CD14-positive monocyte (primary cell): ENCODE measurements at regions of chr21 and their contacts with region 1.

Region 1: GRCh38 chr21:34888569-34889319 is 160.4 kb downstream of the RUNX1 start:
- DNase-seq: peak; percentile 87 to 92 (median 90)
- H3K4me3 ChIP-seq: peak overlapping the region; percentile 73 to 96 (median 87)
- H3K4me3 Mint-ChIP-seq: peak overlapping the region; percentile 95 to 98
- H3K27ac ChIP-seq: peak overlapping the region; percentile 91 to 98
- H3K27ac Mint-ChIP-seq: peak overlapping the region; percentile 96 to 99 (median 99)
- H3K4me1 ChIP-seq: peaks cover 34 to 46% of the 10 kb centered on the region in 2 donors
- H3K4me1 Mint-ChIP-seq: peaks cover 30% of the 10 kb centered on the region
- H3K27me3 ChIP-seq: no peaks in the 10 kb centered on the region
- H3K27me3 Mint-ChIP-seq: no peaks in the 10 kb centered on the region
- CTCF ChIP-seq: no peak

Region 2: GRCh38 chr21:34807146-34807880 is 81.4 kb before region 1 on chr21:
- intact Hi-C with region 1: loop called (anchors 2 to 5 kb)
- DNase-seq: peak; percentile 90 to 98 (median 95)
- H3K4me3 ChIP-seq: peak overlapping the region in 1 of 3 experiments; percentile 14
- H3K4me3 Mint-ChIP-seq: peak overlapping the region in 1 of 2 donors; percentile 64
- H3K27ac ChIP-seq: peak overlapping the region; percentile 85 to 98
- H3K27ac Mint-ChIP-seq: peak overlapping the region; percentile 95 to 99 (median 98)
- H3K4me1 ChIP-seq: peaks cover 40 to 61% of the 10 kb centered on the region in 2 donors
- H3K4me1 Mint-ChIP-seq: peaks cover 77% of the 10 kb centered on the region
- H3K27me3 ChIP-seq: no peaks in the 10 kb centered on the region
- H3K27me3 Mint-ChIP-seq: no peaks in the 10 kb centered on the region
- CTCF ChIP-seq: no peak

Region 3: GRCh38 chr21:34946916-34947534 is 58.3 kb after region 1 on chr21:
- intact Hi-C with region 1: loop called in 1 of 2 experiments (anchors 10 kb)
- DNase-seq: no peak
- H3K4me3 ChIP-seq: no peak overlapping the region
- H3K4me3 Mint-ChIP-seq: no peak overlapping the region
- H3K27ac ChIP-seq: no peak overlapping the region
- H3K27ac Mint-ChIP-seq: peak overlapping the region in 2 of 7 donors; percentile 13 to 79
- H3K4me1 ChIP-seq: peaks cover 11 to 19% of the 10 kb centered on the region in 2 donors
- H3K4me1 Mint-ChIP-seq: peaks cover 42% of the 10 kb centered on the region
- H3K27me3 ChIP-seq: no peaks in the 10 kb centered on the region
- H3K27me3 Mint-ChIP-seq: peaks cover 0 to 2% (median 0%) of the 10 kb centered on the region in 3 donors
- CTCF ChIP-seq: no peak

Region 4: GRCh38 chr21:35051287-35051818 is 162.6 kb after region 1 on chr21:
- intact Hi-C with region 1: loop called (anchors 1 to 2 kb)
- DNase-seq: peak; percentile 92 to 94 (median 93)
- H3K4me3 ChIP-seq: peak overlapping the region in 1 of 3 experiments; percentile 93
- H3K4me3 Mint-ChIP-seq: peak overlapping the region; percentile 28 to 48
- H3K27ac ChIP-seq: peak overlapping the region; percentile 65 to 99
- H3K27ac Mint-ChIP-seq: peak overlapping the region; percentile 99 to 100 (median 100)
- H3K4me1 ChIP-seq: peaks cover 43 to 48% of the 10 kb centered on the region in 2 donors
- H3K4me1 Mint-ChIP-seq: peaks cover 40% of the 10 kb centered on the region
- H3K27me3 ChIP-seq: no peaks in the 10 kb centered on the region
- H3K27me3 Mint-ChIP-seq: peaks cover 0 to 6% (median 3%) of the 10 kb centered on the region in 3 donors
- CTCF ChIP-seq: peak; percentile 74

Region 5: GRCh38 chr21:35932232-35932911 is 1043.6 kb after region 1 on chr21:
- intact Hi-C with region 1: loop called in 1 of 2 experiments (anchors 5 kb)
- DNase-seq: peak; percentile 97 to 99 (median 98)
- H3K4me3 ChIP-seq: peak overlapping the region in 1 of 3 experiments; percentile 15
- H3K4me3 Mint-ChIP-seq: no peak overlapping the region
- H3K27ac ChIP-seq: peak overlapping the region; percentile 83 to 85
- H3K27ac Mint-ChIP-seq: no peak overlapping the region
- H3K4me1 ChIP-seq: peaks cover 27 to 32% of the 10 kb centered on the region in 2 donors
- H3K4me1 Mint-ChIP-seq: no peaks in the 10 kb centered on the region
- H3K27me3 ChIP-seq: no peaks in the 10 kb centered on the region
- H3K27me3 Mint-ChIP-seq: no peaks in the 10 kb centered on the region
- CTCF ChIP-seq: no peak